HEK293 (cell line): ENCODE measurements at regions of chr3 and their contacts with region 1.

Region 1: DNA sequence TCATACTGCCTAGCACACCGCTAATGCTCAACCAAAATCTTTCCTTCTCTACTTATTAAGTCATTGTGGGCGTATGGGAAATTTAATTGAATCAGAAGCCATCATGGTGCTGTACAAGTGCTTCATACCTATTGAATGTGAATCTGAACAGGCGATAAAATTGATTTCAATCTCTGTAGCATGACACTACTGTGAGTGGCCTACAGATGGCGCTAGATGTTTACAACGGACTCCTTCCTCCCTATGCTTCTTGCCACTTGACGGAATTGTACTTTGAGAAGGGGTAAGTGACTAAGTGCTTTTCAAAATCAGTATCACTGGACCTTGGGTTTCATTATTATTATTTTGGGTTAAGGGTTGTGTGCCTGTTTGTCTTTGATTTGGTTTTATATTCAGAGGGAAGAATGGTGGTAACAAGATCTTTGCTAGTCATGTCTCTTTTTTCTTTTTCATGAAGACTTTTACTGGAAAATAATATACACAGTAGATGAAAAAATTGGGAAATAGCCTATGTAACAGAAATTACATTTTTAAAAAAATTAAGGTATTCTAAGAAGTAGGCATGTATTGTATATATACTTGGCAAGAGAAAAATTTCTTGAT is 35.4 kb downstream of the ACP3 start:
- H3K4me3 ChIP-seq: no peak overlapping the region
- H3K27ac ChIP-seq: no peak overlapping the region
- H3K4me1 ChIP-seq: no peaks in the 10 kb centered on the region
- CTCF ChIP-seq: peak; percentile 48; the same call in 1 of the 2 replicates

Region 2: GRCh38 chr3:132253262-132253878 is 99.3 kb before region 1 on chr3:
- CTCF ChIA-PET with region 1: interaction called, 15 read pairs
- POLR2A ChIA-PET with region 1: no interaction called
- H3K4me3 ChIP-seq: no peak overlapping the region
- H3K27ac ChIP-seq: no peak overlapping the region
- H3K4me1 ChIP-seq: no peaks in the 10 kb centered on the region
- CTCF ChIP-seq: no peak

Region 3: DNA sequence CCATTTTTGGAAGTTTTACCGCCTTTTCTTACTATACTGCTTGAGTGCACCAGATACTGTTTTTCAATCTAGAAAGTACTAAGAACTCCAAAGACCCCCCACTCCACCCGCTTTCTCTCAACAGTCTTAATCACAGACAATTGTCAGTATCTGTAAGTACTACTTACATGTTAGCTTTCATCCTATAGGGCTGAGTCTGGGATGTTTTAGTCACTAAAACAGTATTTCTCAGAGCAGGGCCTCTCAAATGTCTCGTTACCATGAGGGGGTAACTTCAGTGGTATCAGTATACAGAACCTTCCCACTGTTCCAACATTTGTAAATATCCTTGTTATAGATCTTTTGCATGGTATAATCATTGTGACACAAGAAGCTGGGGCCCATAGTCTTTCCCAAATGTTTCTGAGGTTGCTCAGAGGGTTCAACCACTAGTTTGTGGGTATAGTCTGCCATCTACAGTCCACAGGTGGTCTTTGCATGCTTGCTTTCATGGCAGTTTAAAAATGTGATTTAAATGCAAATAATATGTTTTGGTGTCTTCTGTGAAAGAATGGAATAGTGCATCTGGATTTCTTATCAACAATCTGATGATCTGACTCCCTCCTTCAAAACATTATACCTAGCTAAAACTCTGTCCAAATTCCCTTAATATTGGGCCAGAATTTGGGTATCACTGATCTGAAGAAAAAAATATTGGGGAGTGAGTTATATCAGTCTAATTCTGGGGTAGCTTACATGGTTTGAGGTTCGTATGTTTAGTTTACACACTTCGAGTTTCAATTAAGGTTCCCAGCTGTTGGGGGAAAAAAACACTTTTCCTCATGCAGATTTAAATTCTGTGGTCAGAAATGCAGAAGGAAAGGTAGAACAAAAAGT is 46.6 kb after region 1 on chr3:
- CTCF ChIA-PET with region 1: interaction called, 136 read pairs
- POLR2A ChIA-PET with region 1: no interaction called
- H3K4me3 ChIP-seq: no peak overlapping the region
- H3K27ac ChIP-seq: no peak overlapping the region
- H3K4me1 ChIP-seq: no peaks in the 10 kb centered on the region
- CTCF ChIP-seq: peak; percentile 32; the same call in 1 of the 2 replicates